Ascending aorta (tissue), 2 donors: ENCODE measurements at regions of chr16 and their contacts with region 1.

Region 1: GRCh38 chr16:46689365-46690280 is at the start of gene ORC6:
- DNase-seq: peak; percentile 88 to 99
- H3K4me3 ChIP-seq: peak within 1 kb of the TSS; percentile 87 to 89
- H3K27ac ChIP-seq: peak within 1 kb of the TSS; percentile 91 to 93
- H3K4me1 ChIP-seq: peaks cover 7 to 19% of the 10 kb centered on the region in 2 donors
- H3K27me3 ChIP-seq: no peaks in the 10 kb centered on the region
- CTCF ChIP-seq: peak in 1 of 3 experiments; percentile 29
- total RNA-seq, gene ORC6: not detected

Region 2: DNA sequence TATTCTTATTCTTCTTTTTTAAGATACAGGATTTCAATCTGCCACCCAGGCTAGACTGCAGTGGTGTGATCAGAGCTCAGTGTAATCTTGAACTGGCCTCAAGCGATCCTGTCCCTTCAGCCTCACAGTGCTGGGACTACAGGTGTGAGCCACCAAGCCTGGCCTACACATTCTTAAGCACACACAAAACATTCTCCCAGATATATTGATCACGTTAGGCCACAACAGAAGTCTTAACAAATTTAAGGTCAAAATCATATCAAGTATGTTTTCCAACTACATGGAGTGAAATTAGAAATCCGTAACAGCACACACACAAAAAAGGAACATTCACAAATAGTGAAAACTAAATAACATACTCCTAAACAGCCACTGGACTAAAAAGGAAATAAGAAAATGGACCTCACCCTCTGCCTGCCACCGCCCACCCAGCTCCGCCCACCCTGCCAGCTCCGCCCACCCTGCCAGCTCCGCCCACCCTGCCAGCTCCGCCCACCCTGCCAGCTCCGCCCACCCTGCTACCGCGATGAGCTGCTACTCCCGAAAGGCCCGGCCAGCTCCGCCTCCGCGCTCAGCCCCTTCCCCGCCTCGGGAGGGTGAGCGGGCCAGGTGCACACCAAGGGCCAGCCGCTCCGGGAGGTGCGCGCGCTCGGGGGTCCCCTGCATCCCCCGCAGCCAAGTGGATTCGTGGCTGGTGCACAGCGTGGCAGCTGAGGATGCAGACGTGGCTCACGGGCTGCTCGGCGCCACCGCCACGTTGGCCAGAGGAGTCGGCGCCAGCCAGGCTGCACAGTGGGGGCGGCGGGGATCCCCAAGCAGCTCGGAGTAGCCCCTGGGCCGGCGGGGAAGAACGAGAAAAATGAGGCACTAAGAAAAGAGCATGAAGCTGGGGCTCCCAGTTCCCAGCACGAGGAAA is 100.1 kb after region 1 on chr16:
- intact Hi-C with region 1: loop called (anchors 5 kb)
- DNase-seq: peak; percentile 38 to 85
- H3K4me3 ChIP-seq: peak overlapping the region; percentile 72 to 81
- H3K27ac ChIP-seq: peak overlapping the region; percentile 31 to 32
- H3K4me1 ChIP-seq: no peaks in the 10 kb centered on the region
- H3K27me3 ChIP-seq: no peaks in the 10 kb centered on the region
- CTCF ChIP-seq: no peak

Region 3: GRCh38 chr16:46830902-46831647 is 141.5 kb after region 1 on chr16 and contains the start of gene C16orf87:
- intact Hi-C with region 1: loop called (anchors 1 kb)
- DNase-seq: peak; percentile 80 to 94
- H3K4me3 ChIP-seq: peak within 1 kb of the TSS; percentile 90 to 94
- H3K27ac ChIP-seq: peak within 1 kb of the TSS; percentile 72 to 94
- H3K4me1 ChIP-seq: peaks cover 2 to 5% of the 10 kb centered on the region in 2 donors
- H3K27me3 ChIP-seq: no peaks in the 10 kb centered on the region
- CTCF ChIP-seq: no peak
- total RNA-seq, gene C16orf87: under 0.01 TPM

Region 4: GRCh38 chr16:46883690-46884512 is 194.3 kb after region 1 on chr16 and contains the start of gene GPT2:
- intact Hi-C with region 1: loop called (anchors 2 kb)
- DNase-seq: peak; percentile 87 to 99
- H3K4me3 ChIP-seq: peak within 1 kb of the TSS; percentile 84 to 93
- H3K27ac ChIP-seq: peak within 1 kb of the TSS; percentile 41 to 63
- H3K4me1 ChIP-seq: peaks cover 0 to 6% of the 10 kb centered on the region in 2 donors
- H3K27me3 ChIP-seq: no peaks in the 10 kb centered on the region
- CTCF ChIP-seq: peak in 1 of 3 experiments; percentile 10
- total RNA-seq, gene GPT2: 7.9 TPM

Region 5: GRCh38 chr16:46908540-46909372 is 219.1 kb after region 1 on chr16:
- intact Hi-C with region 1: loop called (anchors 5 kb)
- DNase-seq: peak in 1 of 2 donors; percentile 76
- H3K4me3 ChIP-seq: no peak overlapping the region
- H3K27ac ChIP-seq: no peak overlapping the region
- H3K4me1 ChIP-seq: no peaks in the 10 kb centered on the region
- H3K27me3 ChIP-seq: no peaks in the 10 kb centered on the region
- CTCF ChIP-seq: peak; percentile 44 to 94 (median 76)

Region 6: GRCh38 chr16:46973207-46973995 is 283.8 kb after region 1 on chr16 and contains the start of gene DNAJA2:
- intact Hi-C with region 1: loop called (anchors 5 kb)
- DNase-seq: peak; percentile 47 to 94
- H3K4me3 ChIP-seq: peak within 1 kb of the TSS; percentile 87
- H3K27ac ChIP-seq: peak within 1 kb of the TSS; percentile 93 to 96
- H3K4me1 ChIP-seq: peaks cover 10 to 15% of the 10 kb centered on the region in 2 donors
- H3K27me3 ChIP-seq: no peaks in the 10 kb centered on the region
- CTCF ChIP-seq: no peak
- total RNA-seq, gene DNAJA2: 15.8 TPM

Region 7: DNA sequence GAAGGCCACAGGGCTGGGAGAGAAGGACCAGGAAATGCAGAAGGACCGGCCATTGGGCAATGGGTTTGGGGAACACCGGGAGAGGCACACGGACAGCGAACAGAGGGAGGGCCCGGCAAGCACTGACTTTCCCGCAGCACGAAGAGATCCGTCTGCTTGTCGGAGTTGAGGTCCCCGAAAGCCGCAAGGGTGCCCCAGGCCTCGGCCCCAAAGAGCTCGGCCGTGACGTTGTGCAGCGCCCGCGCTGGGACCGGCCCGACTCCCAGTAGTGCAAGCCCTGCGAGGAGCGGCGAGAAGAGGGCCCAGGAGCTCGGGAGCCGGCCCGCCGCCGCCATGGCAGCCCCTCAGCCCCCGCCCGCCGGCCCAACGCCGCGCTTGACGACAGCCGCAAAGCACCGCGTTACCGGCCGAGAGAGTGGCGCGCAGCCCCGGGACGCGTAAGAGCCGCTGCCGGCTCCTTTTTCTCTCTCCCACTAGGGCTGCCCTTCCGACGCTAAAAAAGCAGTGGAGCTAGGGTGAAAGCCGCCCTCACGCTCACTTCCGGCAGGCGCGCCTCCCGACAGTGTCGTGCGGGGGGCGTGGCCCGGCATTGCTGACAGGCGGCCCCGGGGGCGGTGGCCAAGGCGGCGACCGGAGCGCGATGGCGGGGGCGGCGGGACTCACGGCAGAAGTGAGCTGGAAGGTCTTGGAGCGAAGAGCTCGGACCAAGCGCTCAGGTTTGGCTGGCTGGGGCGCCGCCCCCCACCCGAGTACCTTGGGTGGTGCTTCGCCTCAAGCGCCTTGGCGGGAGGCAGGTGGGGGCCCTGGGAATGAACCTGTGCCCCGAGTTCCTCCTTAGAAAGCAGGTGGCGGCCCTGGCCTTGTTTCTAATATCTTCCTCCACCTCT is 771.3 kb after region 1 on chr16 and contains the starts of genes ITFG1 and PHKB:
- intact Hi-C with region 1: loop called (anchors 5 kb)
- DNase-seq: peak; percentile 69 to 95
- H3K4me3 ChIP-seq: peak within 1 kb of the TSS; percentile 91 to 95
- H3K27ac ChIP-seq: peak within 1 kb of the TSS; percentile 99 to 100
- H3K4me1 ChIP-seq: peaks cover 8 to 17% of the 10 kb centered on the region in 2 donors
- H3K27me3 ChIP-seq: no peaks in the 10 kb centered on the region
- CTCF ChIP-seq: peak in 1 of 3 experiments; percentile 16
- total RNA-seq, gene ITFG1: 56.7 TPM
- total RNA-seq, gene PHKB: 14.6 TPM